A549 (cell line): ENCODE measurements at regions of chr1 and their contacts with region 1.

Region 1: GRCh38 chr1:204806943-204807687 is 63.5 kb upstream of the NFASC start:
- DNase-seq: peak; percentile 82 to 98
- ATAC-seq: peak; percentile 92 to 97
- H3K4me3 ChIP-seq: peak overlapping the region; percentile 44
- H3K27ac ChIP-seq: peak overlapping the region; percentile 65 to 83
- H3K4me1 ChIP-seq: no peaks in the 10 kb centered on the region
- CTCF ChIP-seq: peak; percentile 100
- EP300 ChIP-seq: no peak
- POLR2A ChIP-seq: no peak
- RAD21 ChIP-seq: peak; percentile 89 to 99

Region 2: GRCh38 chr1:204530932-204531331 is 276.2 kb before region 1 on chr1:
- CTCF ChIA-PET with region 1: interaction called, 13 read pairs
- POLR2A ChIA-PET with region 1: no interaction called
- DNase-seq: no peak
- ATAC-seq: no peak
- H3K4me3 ChIP-seq: no peak overlapping the region
- H3K27ac ChIP-seq: no peak overlapping the region
- H3K4me1 ChIP-seq: no peaks in the 10 kb centered on the region
- CTCF ChIP-seq: no peak
- EP300 ChIP-seq: no peak
- POLR2A ChIP-seq: no peak
- RAD21 ChIP-seq: no peak

Region 3: GRCh38 chr1:204607910-204608309 is 199.2 kb before region 1 on chr1:
- CTCF ChIA-PET with region 1: interaction called, 27 read pairs
- POLR2A ChIA-PET with region 1: no interaction called
- DNase-seq: no peak
- ATAC-seq: no peak
- H3K4me3 ChIP-seq: no peak overlapping the region
- H3K27ac ChIP-seq: no peak overlapping the region
- H3K4me1 ChIP-seq: no peaks in the 10 kb centered on the region
- CTCF ChIP-seq: no peak
- EP300 ChIP-seq: no peak
- POLR2A ChIP-seq: no peak
- RAD21 ChIP-seq: no peak

Region 4: DNA sequence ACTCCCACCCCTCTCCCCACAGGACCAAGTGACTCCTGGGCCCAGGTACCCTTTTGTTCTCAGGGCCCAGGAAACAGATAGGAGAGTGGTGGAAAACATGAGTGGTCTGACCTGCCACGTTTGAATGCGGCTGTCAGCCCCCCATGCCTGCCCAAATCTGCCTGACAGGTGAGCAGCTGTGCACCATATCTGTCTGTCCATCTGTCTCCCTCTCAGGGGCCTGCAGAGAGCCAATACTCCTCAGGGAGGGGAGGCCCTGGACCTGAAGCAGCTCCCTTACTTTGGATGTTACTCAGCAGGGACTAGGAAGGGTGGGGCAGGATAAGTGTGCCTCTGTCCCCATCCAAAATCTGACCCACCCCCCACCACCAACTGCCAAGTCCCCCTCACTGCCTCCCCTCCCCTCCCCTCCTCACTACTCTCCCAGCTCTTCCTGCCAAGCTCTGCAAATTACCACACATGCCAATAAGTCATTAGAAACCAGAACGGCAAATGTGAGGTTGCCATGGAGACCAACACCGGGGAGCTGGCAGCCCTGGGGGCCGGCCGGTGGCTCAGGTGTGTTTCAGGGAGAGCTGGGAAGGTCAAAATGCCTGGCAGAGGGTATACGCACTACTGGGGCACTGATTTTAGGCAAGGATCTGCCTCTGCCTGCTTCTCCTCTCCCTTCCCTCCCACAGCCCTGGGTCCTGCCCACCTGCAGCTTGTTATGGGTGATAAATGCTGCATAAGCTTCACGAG is 133.0 kb before region 1 on chr1:
- CTCF ChIA-PET with region 1: interaction called, 15 read pairs
- POLR2A ChIA-PET with region 1: no interaction called
- DNase-seq: no peak
- ATAC-seq: no peak
- H3K4me3 ChIP-seq: no peak overlapping the region
- H3K27ac ChIP-seq: no peak overlapping the region
- H3K4me1 ChIP-seq: peaks cover 11% of the 10 kb centered on the region
- CTCF ChIP-seq: no peak
- EP300 ChIP-seq: no peak
- POLR2A ChIP-seq: no peak
- RAD21 ChIP-seq: no peak

Region 5: GRCh38 chr1:204763706-204764427 is 43.2 kb before region 1 on chr1:
- CTCF ChIA-PET with region 1: interaction called, 110 read pairs
- POLR2A ChIA-PET with region 1: interaction called, 3 read pairs
- DNase-seq: peak; percentile 67 to 81
- ATAC-seq: peak; percentile 94 to 99
- H3K4me3 ChIP-seq: no peak overlapping the region
- H3K27ac ChIP-seq: peak overlapping the region; percentile 15 to 63; a peak in 3 of 6 replicates
- H3K4me1 ChIP-seq: peaks cover 10% of the 10 kb centered on the region; the same call in 2 of the 3 replicates
- CTCF ChIP-seq: peak; percentile 92
- EP300 ChIP-seq: no peak
- POLR2A ChIP-seq: no peak
- RAD21 ChIP-seq: peak; percentile 91 to 92

Region 6: DNA sequence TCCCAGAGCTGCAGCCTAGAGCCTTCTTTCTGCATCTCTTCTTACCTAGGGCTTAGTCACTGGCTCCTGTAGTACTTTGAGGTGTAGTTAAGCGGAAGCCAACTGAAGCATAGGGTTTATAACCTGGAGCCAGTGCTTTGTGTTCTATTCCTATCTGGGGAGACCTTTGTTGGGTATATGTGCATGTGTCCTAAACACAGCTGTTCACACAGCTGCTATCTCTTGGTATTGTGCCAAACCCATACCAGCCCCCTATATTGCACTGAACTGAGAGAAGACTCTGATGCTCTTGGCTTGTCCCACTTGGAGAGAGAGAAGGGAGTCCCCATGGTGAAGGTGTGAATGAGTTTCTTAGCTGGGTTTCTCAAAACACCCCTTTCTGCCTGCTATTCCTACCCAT is 46.3 kb after region 1 on chr1:
- CTCF ChIA-PET with region 1: interaction called, 21 read pairs
- POLR2A ChIA-PET with region 1: no interaction called
- DNase-seq: no peak
- ATAC-seq: no peak
- H3K4me3 ChIP-seq: no peak overlapping the region
- H3K27ac ChIP-seq: no peak overlapping the region
- H3K4me1 ChIP-seq: no peaks in the 10 kb centered on the region
- CTCF ChIP-seq: no peak
- EP300 ChIP-seq: no peak
- POLR2A ChIP-seq: no peak
- RAD21 ChIP-seq: no peak

Region 7: DNA sequence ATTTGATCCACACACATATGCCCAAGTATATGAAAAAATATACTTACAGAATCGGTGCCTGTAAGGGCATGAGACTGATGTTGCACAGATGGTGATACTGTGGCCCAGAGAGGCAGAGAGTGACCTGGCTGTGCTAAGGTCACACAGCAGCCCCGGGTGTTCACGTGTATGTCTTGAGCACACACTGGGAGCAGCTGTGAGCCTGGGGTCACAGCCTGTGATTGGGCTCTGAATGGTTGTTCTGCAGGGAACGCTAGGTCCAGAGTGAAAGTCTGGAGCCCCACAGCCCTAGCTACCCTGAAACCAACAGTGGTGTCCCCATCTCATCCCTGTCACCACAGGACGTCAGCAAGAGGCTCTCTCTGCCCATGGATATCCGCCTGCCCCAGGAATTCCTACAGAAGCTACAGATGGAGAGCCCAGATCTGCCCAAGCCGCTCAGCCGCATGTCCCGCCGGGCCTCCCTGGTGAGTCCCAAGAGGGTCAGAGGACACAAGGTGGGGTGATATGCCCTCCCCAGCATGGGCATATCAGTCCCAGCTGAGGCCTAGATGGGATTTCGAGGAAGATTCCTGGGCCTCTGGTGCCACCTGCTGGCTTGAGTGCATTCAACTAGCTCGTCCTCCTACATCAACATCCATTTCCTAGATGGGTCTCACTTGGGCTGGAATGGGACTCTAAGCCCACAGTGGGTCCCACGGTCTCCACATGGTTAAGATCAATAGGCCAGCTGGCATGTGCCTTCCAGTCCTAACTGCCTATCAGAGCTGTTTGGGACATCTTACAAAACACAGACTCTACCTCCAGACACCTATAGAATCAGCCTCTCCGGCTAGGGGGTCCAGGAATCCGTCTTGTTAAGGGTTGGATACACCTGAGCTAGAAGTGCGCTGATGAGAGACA is 717.0 kb after region 1 on chr1:
- CTCF ChIA-PET with region 1: interaction called, 10 read pairs
- POLR2A ChIA-PET with region 1: no interaction called
- DNase-seq: peak; percentile 71 to 87
- ATAC-seq: peak; percentile 65 to 81
- H3K4me3 ChIP-seq: no peak overlapping the region
- H3K27ac ChIP-seq: no peak overlapping the region
- H3K4me1 ChIP-seq: 0 out of 3 replicates have a peak, but pooled peaks cover 6% of the 10 kb centered on the region
- CTCF ChIP-seq: peak; percentile 91
- EP300 ChIP-seq: no peak
- POLR2A ChIP-seq: no peak
- RAD21 ChIP-seq: peak; percentile 95